ENCODE measurements at regions of chr6 and their contacts with region 1.

Region 1: DNA sequence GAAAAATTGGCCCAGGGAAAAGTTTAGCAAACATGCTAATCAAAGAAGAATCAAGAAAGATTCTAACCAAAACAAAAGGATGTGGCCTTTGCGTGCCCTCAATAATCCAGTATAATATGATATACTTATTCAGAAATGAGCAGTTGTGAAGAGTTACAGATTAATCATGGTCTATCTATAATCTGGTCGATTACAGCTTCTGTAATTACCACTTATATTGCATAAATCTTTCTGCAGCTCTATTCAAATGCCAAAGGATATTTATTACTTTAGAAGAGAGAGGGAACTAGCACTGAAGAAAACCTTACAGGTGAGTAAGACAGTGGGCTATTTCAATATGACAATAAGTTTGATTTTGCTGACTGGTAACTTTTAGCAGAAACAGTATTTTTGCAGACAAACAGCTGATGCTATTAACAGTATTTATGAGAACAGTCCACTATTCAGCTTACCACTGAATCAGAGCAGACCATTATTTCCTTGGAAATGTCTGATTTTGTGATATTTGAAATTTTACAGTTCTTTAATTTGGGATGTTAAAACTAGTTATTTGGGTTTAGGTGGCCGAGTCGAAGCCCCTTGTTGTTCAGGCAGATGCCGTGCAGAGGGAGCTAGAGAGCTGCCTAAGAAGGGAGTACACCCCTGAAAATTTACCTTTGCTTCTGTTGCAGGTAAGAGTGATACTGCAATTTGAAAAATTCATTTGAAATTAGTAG is 92.2 kb downstream of the CEP57L1 start:
- DNase-seq: peak; percentile 24 to 75 (median 64)
- ATAC-seq: peak; percentile 96
- H3K4me3 ChIP-seq: no peak overlapping the region
- H3K4me3 Mint-ChIP-seq: no peak overlapping the region
- H3K27ac ChIP-seq: no peak overlapping the region
- H3K27ac Mint-ChIP-seq: no peak overlapping the region
- H3K4me1 ChIP-seq: no peaks in the 10 kb centered on the region
- H3K4me1 Mint-ChIP-seq: peaks cover 2% of the 10 kb centered on the region
- H3K27me3 ChIP-seq: peaks cover 3 to 6% of the 10 kb centered on the region in 2 experiments
- H3K27me3 Mint-ChIP-seq: peaks cover 11% of the 10 kb centered on the region
- CTCF ChIP-seq: peak; percentile 88

Region 2: GRCh38 chr6:108835218-108835850 is 352.2 kb before region 1 on chr6:
- CTCF ChIA-PET with region 1: no interaction called
- POLR2A ChIA-PET with region 1: no interaction called
- intact Hi-C with region 1: no loop called
- DNase-seq: peak; percentile 66 to 90 (median 85)
- ATAC-seq: peak; percentile 99
- H3K4me3 ChIP-seq: no peak overlapping the region
- H3K4me3 Mint-ChIP-seq: no peak overlapping the region
- H3K27ac ChIP-seq: no peak overlapping the region
- H3K27ac Mint-ChIP-seq: no peak overlapping the region
- H3K4me1 ChIP-seq: peaks cover 14% of the 10 kb centered on the region
- H3K4me1 Mint-ChIP-seq: peaks cover 23% of the 10 kb centered on the region
- H3K27me3 ChIP-seq: no peaks in the 10 kb centered on the region
- H3K27me3 Mint-ChIP-seq: no peaks in the 10 kb centered on the region
- CTCF ChIP-seq: peak; percentile 89

Region 3: GRCh38 chr6:109202409-109203284 is 15.1 kb after region 1 on chr6:
- CTCF ChIA-PET with region 1: interaction called, 11 read pairs
- POLR2A ChIA-PET with region 1: interaction called, 3 read pairs
- intact Hi-C with region 1: no loop called
- DNase-seq: no peak
- ATAC-seq: no peak
- H3K4me3 ChIP-seq: no peak overlapping the region
- H3K4me3 Mint-ChIP-seq: no peak overlapping the region
- H3K27ac ChIP-seq: no peak overlapping the region
- H3K27ac Mint-ChIP-seq: no peak overlapping the region
- H3K4me1 ChIP-seq: no peaks in the 10 kb centered on the region
- H3K4me1 Mint-ChIP-seq: no peaks in the 10 kb centered on the region
- H3K27me3 ChIP-seq: no peaks in the 10 kb centered on the region
- H3K27me3 Mint-ChIP-seq: no peaks in the 10 kb centered on the region
- CTCF ChIP-seq: no peak

Region 4: GRCh38 chr6:109239651-109240321 is 52.2 kb after region 1 on chr6:
- CTCF ChIA-PET with region 1: no interaction called
- POLR2A ChIA-PET with region 1: no interaction called
- intact Hi-C with region 1: no loop called
- DNase-seq: no peak
- ATAC-seq: no peak
- H3K4me3 ChIP-seq: no peak overlapping the region
- H3K4me3 Mint-ChIP-seq: no peak overlapping the region
- H3K27ac ChIP-seq: no peak overlapping the region
- H3K27ac Mint-ChIP-seq: no peak overlapping the region
- H3K4me1 ChIP-seq: no peaks in the 10 kb centered on the region
- H3K4me1 Mint-ChIP-seq: peaks cover 25% of the 10 kb centered on the region
- H3K27me3 ChIP-seq: no peaks in the 10 kb centered on the region
- H3K27me3 Mint-ChIP-seq: no peaks in the 10 kb centered on the region
- CTCF ChIP-seq: no peak

Region 5: DNA sequence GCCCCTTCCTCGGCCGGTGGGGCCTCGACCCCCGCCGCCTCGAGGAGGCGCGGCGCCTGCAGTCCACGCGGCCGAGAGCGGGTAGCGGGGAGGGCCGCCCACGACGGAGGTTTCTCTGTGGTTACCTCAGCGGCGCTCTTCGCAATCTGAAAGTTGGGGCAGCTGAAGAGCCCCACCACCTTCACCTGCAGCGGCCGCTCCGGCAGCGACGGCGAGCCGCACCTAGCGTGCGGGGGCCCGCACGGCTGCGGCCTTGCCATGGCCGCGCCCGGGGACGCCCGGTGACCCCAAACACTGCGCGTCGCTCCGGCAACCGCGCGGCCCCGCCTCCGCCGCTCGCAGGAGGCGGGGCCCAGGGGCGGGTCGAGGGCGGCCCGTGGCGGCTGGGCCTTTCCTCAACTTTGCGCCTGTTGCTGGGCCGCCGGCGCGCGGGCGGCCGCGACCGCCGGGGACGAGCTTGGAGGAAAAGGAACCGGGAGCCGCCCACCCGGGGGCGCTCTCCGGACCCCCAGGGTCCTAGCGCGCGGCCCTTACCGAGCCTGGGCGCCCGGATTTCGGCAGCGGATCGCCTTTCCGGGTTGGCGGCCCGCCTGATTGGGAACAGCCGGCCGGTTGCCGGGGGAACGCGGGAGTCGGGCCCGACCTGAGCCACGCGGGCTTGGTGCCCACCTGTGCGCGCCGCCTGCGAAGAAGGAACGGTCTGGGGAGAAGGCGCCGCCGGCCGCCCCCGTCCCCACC is 252.9 kb after region 1 on chr6 and contains the starts of genes PPIL6 and SMPD2:
- CTCF ChIA-PET with region 1: interaction called, 7 read pairs
- POLR2A ChIA-PET with region 1: interaction called, 4 read pairs
- intact Hi-C with region 1: loop called (anchors 1 to 5 kb)
- DNase-seq: peak; percentile 61 to 92 (median 75)
- ATAC-seq: peak; percentile 79
- H3K4me3 ChIP-seq: peak within 1 kb of the TSS; percentile 68 to 92
- H3K4me3 Mint-ChIP-seq: peak within 1 kb of the TSS; percentile 89
- H3K27ac ChIP-seq: peak within 1 kb of the TSS; percentile 69 to 83
- H3K27ac Mint-ChIP-seq: peak within 1 kb of the TSS; percentile 93
- H3K4me1 ChIP-seq: peaks cover 26% of the 10 kb centered on the region
- H3K4me1 Mint-ChIP-seq: peaks cover 35% of the 10 kb centered on the region
- H3K27me3 ChIP-seq: no peaks in the 10 kb centered on the region
- H3K27me3 Mint-ChIP-seq: no peaks in the 10 kb centered on the region
- CTCF ChIP-seq: peak; percentile 31
- total RNA-seq, gene PPIL6: 1.3 to 1.4 TPM
- total RNA-seq, gene SMPD2: 22.8 to 23.9 TPM

Region 6: DNA sequence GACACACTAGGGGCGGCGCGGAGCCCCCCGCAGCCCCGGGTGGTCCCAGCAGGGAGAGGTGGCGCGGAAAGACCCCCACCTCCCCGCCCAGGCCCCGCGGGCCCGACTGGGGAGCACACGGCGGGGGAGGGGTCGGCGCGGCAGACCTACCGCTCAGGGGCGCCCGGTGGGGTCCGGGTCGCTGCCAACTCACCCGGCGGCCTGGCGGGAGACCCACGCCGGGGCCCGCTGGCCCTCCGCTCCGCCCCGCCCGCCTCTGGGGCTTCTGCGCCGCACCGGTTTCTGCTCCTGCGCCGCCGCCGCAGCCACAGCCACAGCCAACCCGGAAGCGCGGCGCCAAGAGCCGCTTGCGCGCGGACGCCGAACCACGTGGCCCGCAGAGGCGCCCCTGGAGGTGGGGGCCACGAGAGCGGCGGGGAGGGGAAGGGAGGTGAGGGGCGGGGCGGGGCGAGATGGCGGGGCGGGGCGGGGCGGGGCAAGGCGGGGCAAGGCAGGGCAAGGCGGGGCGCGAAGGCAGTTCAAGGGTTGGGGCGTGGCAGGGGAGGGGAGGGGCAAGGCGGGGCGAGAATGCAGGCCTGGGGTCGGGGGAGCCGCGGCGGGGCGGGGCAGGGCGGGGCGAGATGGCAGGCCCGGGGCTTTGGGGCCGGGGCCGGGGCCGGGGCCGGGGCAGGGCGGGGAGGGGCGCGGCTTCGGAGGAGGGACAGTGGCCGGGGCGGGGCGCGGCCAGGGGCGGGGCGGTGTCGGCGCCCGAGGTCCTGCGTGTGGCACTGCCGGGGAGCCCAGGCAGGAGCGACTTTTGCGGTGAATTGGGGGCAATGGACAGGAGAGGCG is 295.6 kb after region 1 on chr6 and contains the start of gene ZBTB24:
- CTCF ChIA-PET with region 1: interaction called, 7 read pairs
- POLR2A ChIA-PET with region 1: no interaction called
- intact Hi-C with region 1: loop called in 1 of 2 experiments (anchors 5 kb)
- DNase-seq: peak; percentile 75 to 96 (median 88)
- ATAC-seq: peak; percentile 85
- H3K4me3 ChIP-seq: peak within 1 kb of the TSS; percentile 65 to 69
- H3K4me3 Mint-ChIP-seq: peak within 1 kb of the TSS; percentile 95
- H3K27ac ChIP-seq: peak within 1 kb of the TSS; percentile 49 to 62
- H3K27ac Mint-ChIP-seq: peak within 1 kb of the TSS; percentile 89
- H3K4me1 ChIP-seq: peaks cover 37% of the 10 kb centered on the region
- H3K4me1 Mint-ChIP-seq: peaks cover 50% of the 10 kb centered on the region
- H3K27me3 ChIP-seq: no peaks in the 10 kb centered on the region
- H3K27me3 Mint-ChIP-seq: no peaks in the 10 kb centered on the region
- CTCF ChIP-seq: no peak
- total RNA-seq, gene ZBTB24: 10.9 to 11.2 TPM

Region 7: DNA sequence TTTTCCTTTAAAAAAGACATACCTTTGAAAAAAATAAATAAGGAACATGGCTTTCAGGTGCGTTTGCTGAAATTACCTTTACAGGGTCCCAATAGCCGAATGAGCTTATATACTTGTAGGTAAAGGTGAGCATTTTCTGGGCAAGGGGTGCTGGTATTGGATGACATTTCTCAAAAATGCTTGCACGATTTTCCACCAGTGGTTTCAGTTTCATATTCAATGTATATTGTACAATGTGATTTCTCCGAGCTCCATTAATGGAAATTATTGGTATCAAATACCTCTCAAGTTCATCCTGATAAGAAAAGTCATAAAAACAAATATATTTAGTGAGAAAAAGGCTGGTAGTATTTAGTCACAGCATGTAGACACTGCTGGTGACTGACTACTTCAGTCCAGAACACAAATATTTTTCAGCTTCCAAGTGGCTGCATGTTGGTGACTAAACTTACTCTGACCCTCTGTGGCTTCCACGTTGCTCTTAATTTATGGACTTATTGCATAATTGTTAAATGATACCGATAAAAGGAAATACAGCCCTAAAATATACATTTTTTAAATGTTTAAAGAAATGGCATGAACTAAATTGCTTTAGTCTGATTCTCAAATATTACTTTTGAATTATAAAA is 328.3 kb after region 1 on chr6:
- CTCF ChIA-PET with region 1: no interaction called
- POLR2A ChIA-PET with region 1: no interaction called
- intact Hi-C with region 1: no loop called
- DNase-seq: peak in 2 of 9 experiments; percentile 22 to 37
- ATAC-seq: peak; percentile 57
- H3K4me3 ChIP-seq: peak overlapping the region; percentile 13 to 19
- H3K4me3 Mint-ChIP-seq: peak overlapping the region; percentile 71
- H3K27ac ChIP-seq: no peak overlapping the region
- H3K27ac Mint-ChIP-seq: no peak overlapping the region
- H3K4me1 ChIP-seq: peaks cover 26% of the 10 kb centered on the region
- H3K4me1 Mint-ChIP-seq: peaks cover 30% of the 10 kb centered on the region
- H3K27me3 ChIP-seq: no peaks in the 10 kb centered on the region
- H3K27me3 Mint-ChIP-seq: no peaks in the 10 kb centered on the region
- CTCF ChIP-seq: no peak

Region 8: DNA sequence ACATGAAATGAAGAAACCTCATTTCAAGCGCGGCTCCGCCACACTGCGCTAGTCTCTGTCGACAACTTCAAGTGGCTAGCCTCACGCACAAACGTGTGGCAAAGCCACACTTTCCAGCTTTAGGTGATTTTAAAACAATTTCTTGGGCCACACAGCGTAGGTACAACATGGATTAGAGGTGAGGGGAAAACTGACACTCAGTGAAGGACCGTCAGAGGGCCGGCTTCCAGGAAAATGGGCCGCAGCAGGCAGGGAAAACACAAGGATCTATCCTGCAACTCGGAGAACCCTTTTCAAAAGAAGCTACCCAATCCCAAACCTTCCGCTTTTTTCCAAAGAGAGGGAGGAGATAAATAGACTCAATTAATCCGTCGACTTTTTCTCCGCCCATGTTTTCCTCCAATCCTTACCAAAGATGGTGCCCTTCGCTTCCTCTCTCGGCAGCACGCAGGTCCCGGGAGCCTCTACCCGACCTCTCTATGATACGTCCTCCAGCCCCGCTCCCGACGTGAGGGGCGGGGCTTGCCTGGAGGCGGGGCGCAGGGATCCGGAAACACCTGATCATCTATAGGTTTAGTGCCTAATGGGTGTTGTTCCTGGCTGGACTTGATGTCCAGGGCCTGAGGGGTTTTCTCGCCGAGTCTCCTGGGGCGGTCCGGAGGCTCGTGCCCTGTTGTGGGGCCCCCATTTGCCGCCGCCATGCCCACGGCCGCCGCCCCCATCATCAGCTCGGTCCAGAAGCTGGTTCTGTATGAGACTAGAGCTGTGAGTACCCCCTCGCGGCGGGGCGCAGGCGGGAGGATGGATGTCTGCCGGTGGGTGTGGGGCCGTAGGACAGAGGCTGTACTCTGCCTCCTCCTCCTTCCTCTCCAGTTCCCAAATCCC is 503.4 kb after region 1 on chr6 and contains the starts of genes AK9 and FIG4:
- CTCF ChIA-PET with region 1: interaction called, 4 read pairs
- POLR2A ChIA-PET with region 1: no interaction called
- intact Hi-C with region 1: loop called (anchors 2 to 5 kb)
- DNase-seq: peak; percentile 68 to 93 (median 90)
- ATAC-seq: peak; percentile 96
- H3K4me3 ChIP-seq: peak within 1 kb of the TSS; percentile 85 to 91
- H3K4me3 Mint-ChIP-seq: peak within 1 kb of the TSS; percentile 93
- H3K27ac ChIP-seq: peak within 1 kb of the TSS; percentile 81 to 91
- H3K27ac Mint-ChIP-seq: peak within 1 kb of the TSS; percentile 98
- H3K4me1 ChIP-seq: peaks cover 22% of the 10 kb centered on the region
- H3K4me1 Mint-ChIP-seq: peaks cover 27% of the 10 kb centered on the region
- H3K27me3 ChIP-seq: no peaks in the 10 kb centered on the region
- H3K27me3 Mint-ChIP-seq: no peaks in the 10 kb centered on the region
- CTCF ChIP-seq: no peak
- total RNA-seq, gene AK9: 5.1 to 6.5 TPM
- total RNA-seq, gene FIG4: 2.3 TPM

Region 9: DNA sequence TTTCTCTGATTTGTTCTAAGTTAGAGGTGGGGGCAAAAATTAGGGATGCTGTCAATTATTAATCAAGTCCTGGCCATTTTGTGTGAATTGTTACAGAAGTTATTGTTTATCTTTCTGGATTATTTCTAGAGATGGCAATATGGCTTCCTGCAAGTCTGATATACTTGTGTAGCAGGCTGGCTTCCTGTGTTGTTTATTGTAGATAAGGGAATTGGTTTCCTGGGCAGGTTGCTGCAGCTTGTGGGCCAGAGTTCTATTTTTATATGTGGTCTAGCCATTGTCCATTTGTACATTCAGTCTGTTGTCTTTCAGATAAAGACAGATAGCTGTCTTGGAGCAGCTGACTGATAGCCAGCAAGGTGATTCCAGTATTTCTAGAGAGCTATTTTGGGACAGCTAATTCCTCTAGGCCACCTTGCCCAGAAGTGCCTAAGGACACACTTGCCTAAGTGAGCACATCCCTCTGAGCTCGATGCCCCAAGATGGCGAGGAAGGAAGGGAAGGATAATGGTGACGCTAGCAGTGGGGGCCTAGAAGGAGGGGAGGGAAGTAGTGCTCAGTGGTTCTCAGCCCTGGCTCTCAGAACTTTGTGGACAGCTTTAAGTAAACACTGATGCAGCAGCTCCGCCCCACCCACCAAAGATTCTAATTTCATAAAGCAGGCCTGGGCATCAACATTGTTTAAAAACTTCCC is 1202.3 kb after region 1 on chr6:
- CTCF ChIA-PET with region 1: no interaction called
- POLR2A ChIA-PET with region 1: no interaction called
- intact Hi-C with region 1: loop called (anchors 1 to 2 kb)
- DNase-seq: peak in 3 of 9 experiments; percentile 14 to 53 (median 36)
- ATAC-seq: peak; percentile 45
- H3K4me3 ChIP-seq: no peak overlapping the region
- H3K4me3 Mint-ChIP-seq: peak overlapping the region; percentile 35
- H3K27ac ChIP-seq: peak overlapping the region in 1 of 2 experiments; percentile 26
- H3K27ac Mint-ChIP-seq: peak overlapping the region; percentile 93
- H3K4me1 ChIP-seq: peaks cover 33% of the 10 kb centered on the region
- H3K4me1 Mint-ChIP-seq: peaks cover 39% of the 10 kb centered on the region
- H3K27me3 ChIP-seq: no peaks in the 10 kb centered on the region
- H3K27me3 Mint-ChIP-seq: no peaks in the 10 kb centered on the region
- CTCF ChIP-seq: no peak

Region 10: DNA sequence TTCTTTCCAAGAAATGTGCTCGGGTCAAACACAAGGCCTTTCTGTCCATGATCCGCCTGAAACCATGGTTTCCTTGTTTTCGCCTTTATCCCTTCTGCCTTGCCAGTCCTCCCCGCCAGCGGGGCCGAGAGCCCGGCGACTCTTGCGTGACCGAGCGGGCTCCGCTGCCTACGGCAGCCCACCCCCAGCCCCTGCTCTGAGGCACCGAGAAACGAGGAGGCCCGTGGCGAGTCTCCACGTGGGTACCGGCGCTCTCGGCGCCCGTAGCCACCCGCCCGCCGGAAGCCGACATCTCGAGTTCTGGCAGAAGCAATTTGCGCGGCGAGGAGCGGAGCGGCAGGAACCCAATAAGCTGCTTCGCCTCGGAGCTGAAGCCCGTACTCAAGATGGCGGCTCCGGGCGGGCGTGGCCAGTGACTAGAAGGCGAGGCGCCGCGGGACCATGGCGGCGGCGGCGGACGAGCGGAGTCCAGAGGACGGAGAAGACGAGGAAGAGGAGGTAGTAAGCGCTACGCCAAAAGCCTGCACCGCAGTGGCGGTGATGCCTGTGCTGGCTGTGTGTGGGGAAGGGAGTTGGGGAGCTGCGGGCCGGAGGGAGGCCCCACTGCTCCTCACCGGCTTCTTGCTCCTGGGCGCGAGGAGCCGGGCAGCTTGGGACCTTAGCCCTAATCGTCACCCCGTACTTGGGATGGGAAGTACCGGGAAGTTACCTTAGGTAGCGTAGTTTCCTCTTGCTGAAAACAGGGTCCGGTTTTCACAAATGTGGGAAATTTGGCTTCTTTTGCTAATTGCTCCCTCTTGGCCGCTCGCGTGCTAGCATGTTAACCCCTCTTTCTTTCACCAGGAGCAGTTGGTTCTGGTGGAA is 1771.0 kb after region 1 on chr6 and contains the start of gene GTF3C6:
- CTCF ChIA-PET with region 1: no interaction called
- POLR2A ChIA-PET with region 1: no interaction called
- intact Hi-C with region 1: no loop called
- DNase-seq: peak; percentile 81 to 95 (median 93)
- ATAC-seq: peak; percentile 99
- H3K4me3 ChIP-seq: peak within 1 kb of the TSS; percentile 97 to 99
- H3K4me3 Mint-ChIP-seq: peak within 1 kb of the TSS; percentile 100
- H3K27ac ChIP-seq: peak within 1 kb of the TSS; percentile 91 to 92
- H3K27ac Mint-ChIP-seq: peak within 1 kb of the TSS; percentile 100
- H3K4me1 ChIP-seq: peaks cover 5% of the 10 kb centered on the region
- H3K4me1 Mint-ChIP-seq: peaks cover 21% of the 10 kb centered on the region
- H3K27me3 ChIP-seq: no peaks in the 10 kb centered on the region
- H3K27me3 Mint-ChIP-seq: peaks cover 5% of the 10 kb centered on the region
- CTCF ChIP-seq: no peak
- total RNA-seq, gene GTF3C6: 25.0 to 26.3 TPM

Measured in CD8-positive, alpha-beta T cell (primary cell).